Caco-2 (cell line): ENCODE measurements at regions of chr2 and their contacts with region 1.

Region 1: DNA sequence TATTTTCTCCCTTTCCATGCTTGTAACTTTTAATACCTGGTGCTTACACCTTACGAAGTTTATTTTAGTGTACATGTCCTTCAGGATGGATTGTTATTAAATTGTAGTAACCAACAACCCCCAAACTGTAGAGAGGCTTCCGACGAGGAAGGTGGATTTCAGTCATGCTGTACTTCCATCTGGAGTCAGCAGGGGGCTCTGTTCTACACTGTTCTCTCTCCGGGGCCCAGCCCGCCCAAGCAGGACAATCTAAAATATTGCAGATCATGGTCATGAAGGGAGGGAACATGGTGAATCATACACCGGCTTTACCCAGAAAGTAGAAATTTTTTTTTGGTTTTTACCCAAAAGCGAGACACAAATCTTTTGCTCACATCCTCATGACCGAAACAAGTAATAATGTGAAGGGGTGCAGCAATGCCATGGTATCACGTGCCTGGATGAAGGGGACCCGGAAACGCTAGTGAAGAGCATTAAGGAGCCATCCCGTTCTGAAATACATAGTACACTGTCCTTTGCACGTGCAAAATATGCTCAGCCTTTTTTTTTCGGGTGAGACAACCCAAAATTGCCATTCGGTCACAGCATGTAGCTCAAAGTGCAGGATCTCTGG is 884.8 kb downstream of the EPHA4 start:
- DNase-seq: peak; percentile 69 to 77
- H3K4me3 ChIP-seq: no peak overlapping the region
- H3K4me3 Mint-ChIP-seq: no peak overlapping the region
- H3K27ac Mint-ChIP-seq: no peak overlapping the region
- H3K4me1 ChIP-seq: no peaks in the 10 kb centered on the region
- H3K4me1 Mint-ChIP-seq: no peaks in the 10 kb centered on the region
- H3K27me3 ChIP-seq: no peaks in the 10 kb centered on the region
- H3K27me3 Mint-ChIP-seq: peaks cover 10% of the 10 kb centered on the region
- CTCF ChIP-seq: peak; percentile 92 to 98

Region 2: DNA sequence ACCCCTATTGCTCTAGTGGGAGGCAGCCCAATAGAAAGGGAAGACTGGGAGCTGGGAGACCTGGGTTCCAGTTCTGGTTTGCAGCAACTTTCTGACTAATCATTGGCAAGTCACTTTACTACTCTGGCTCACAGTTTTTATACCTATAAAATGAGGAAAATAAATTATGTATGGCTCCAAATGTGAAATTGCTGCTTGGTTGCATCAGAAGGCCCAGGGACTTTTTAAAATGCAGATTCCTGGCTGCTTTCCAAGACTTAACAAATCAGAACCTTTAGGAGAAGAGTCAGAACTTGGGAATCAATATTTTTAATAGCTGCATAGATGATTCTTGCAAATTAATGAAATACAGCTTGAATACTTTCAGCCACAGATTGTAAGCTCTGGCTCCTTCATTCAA is 59.1 kb before region 1 on chr2:
- CTCF ChIA-PET with region 1: no interaction called
- POLR2A ChIA-PET with region 1: no interaction called
- intact Hi-C with region 1: no loop called
- DNase-seq: no peak
- H3K4me3 ChIP-seq: no peak overlapping the region
- H3K4me3 Mint-ChIP-seq: no peak overlapping the region
- H3K27ac Mint-ChIP-seq: no peak overlapping the region
- H3K4me1 ChIP-seq: no peaks in the 10 kb centered on the region
- H3K4me1 Mint-ChIP-seq: no peaks in the 10 kb centered on the region
- H3K27me3 ChIP-seq: no peaks in the 10 kb centered on the region; the same call in 1 of the 2 replicates
- H3K27me3 Mint-ChIP-seq: peaks cover 30% of the 10 kb centered on the region
- CTCF ChIP-seq: no peak

Region 3: GRCh38 chr2:220880623-220881596 is 193.6 kb after region 1 on chr2:
- CTCF ChIA-PET with region 1: no interaction called
- POLR2A ChIA-PET with region 1: no interaction called
- intact Hi-C with region 1: loop called (anchors 10 kb)
- DNase-seq: no peak
- H3K4me3 ChIP-seq: no peak overlapping the region
- H3K4me3 Mint-ChIP-seq: no peak overlapping the region
- H3K27ac Mint-ChIP-seq: no peak overlapping the region
- H3K4me1 ChIP-seq: no peaks in the 10 kb centered on the region
- H3K4me1 Mint-ChIP-seq: no peaks in the 10 kb centered on the region
- H3K27me3 ChIP-seq: peaks cover 2% of the 10 kb centered on the region
- H3K27me3 Mint-ChIP-seq: peaks cover 3% of the 10 kb centered on the region
- CTCF ChIP-seq: no peak

Region 4: DNA sequence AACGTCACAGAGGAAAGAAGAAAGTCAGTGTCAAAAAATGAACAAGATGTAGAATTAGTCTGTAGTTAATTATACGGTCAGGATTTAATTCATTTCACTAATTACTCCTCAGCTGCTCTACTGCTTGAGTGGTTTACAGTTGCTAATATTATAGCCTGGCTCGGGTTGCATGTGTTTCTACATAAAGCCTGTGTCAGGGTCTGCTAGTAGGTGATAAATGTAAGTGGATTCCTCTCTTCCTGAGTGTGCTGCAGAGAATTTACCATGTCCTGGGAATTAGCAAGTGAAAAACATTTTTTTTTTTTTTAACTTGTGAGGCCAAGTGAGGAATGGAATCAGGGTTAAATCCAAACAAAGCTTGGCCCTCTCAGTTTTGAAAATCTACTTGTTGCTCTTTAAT is 262.1 kb after region 1 on chr2:
- CTCF ChIA-PET with region 1: no interaction called
- POLR2A ChIA-PET with region 1: no interaction called
- intact Hi-C with region 1: loop called (anchors 10 kb)
- DNase-seq: no peak
- H3K4me3 ChIP-seq: no peak overlapping the region
- H3K4me3 Mint-ChIP-seq: no peak overlapping the region
- H3K27ac Mint-ChIP-seq: no peak overlapping the region
- H3K4me1 ChIP-seq: no peaks in the 10 kb centered on the region
- H3K4me1 Mint-ChIP-seq: no peaks in the 10 kb centered on the region
- H3K27me3 ChIP-seq: no peaks in the 10 kb centered on the region
- H3K27me3 Mint-ChIP-seq: peaks cover 3% of the 10 kb centered on the region
- CTCF ChIP-seq: no peak

Region 5: DNA sequence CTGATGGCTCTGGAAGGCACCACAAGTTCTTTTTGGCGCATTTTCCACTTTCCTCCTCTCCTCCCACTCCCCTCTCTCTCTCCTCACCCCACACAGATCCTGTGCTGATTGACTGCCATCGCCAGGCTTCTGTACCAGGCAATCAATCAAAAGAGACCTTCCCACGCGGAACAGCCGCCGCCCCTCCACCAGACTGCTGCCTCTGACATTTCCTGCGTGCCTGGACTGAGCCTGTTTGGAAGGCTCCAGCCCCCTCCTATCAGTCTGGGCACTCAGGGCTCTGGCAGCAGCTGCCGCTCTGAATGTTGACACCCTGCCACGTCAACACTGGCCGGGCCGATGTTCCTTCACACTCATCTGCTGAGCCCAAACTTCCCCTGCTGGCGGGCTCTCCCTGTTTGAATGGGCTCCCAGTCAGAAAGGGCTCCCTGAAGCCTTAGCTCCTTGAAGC is 417.0 kb after region 1 on chr2:
- CTCF ChIA-PET with region 1: interaction called, 3 read pairs
- POLR2A ChIA-PET with region 1: no interaction called
- intact Hi-C with region 1: loop called (anchors 10 kb)
- DNase-seq: no peak
- H3K4me3 ChIP-seq: no peak overlapping the region
- H3K4me3 Mint-ChIP-seq: no peak overlapping the region
- H3K27ac Mint-ChIP-seq: no peak overlapping the region
- H3K4me1 ChIP-seq: no peaks in the 10 kb centered on the region
- H3K4me1 Mint-ChIP-seq: no peaks in the 10 kb centered on the region
- H3K27me3 ChIP-seq: no peaks in the 10 kb centered on the region
- H3K27me3 Mint-ChIP-seq: peaks cover 2% of the 10 kb centered on the region
- CTCF ChIP-seq: no peak